ENCODE measurements at regions of chr5 and their contacts with region 1.

Region 1: GRCh38 chr5:37370864-37371726 is at the start of gene NUP155:
- DNase-seq: peak; percentile 74 to 93 (median 86)
- ATAC-seq: peak; percentile 92 to 93
- H3K4me3 Mint-ChIP-seq: peak within 1 kb of the TSS; percentile 95 to 99 (median 98)
- H3K27ac Mint-ChIP-seq: peak within 1 kb of the TSS; percentile 94 to 99 (median 97)
- H3K4me1 Mint-ChIP-seq: peaks cover 21 to 43% (median 40%) of the 10 kb centered on the region in 4 donors
- H3K27me3 Mint-ChIP-seq: no peaks in the 10 kb centered on the region
- polyA plus RNA-seq, gene NUP155: 16.6 to 25.0 (median 24.5) TPM

Region 2: DNA sequence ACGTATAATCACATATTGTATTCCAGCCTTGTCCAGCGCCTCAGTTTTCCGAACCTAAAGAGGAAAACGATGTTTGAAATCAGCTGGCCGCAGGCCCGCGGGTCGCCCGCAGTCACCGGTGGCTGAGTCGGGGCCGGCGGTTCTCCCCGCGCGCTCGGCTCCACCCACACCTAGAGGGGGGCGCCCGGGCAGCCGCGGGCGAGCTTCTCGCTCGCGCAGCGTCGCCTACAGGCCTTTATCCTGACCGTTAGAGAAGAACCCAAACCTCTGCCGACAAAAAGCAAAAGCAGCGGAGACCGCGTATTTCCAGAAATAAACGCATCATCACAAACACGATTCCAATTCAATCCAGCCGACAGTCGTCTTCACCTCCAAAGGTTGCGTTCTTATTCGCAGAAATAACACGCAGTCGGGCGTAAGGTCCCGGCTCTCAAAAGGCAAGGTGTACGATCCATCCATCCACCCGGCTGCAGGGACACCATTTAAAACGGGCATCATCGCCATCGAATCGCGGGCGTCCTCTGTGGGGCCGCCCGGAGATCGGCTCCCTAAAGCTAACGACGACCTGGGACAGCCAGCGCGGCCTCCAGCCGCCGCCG is 495.2 kb before region 1 on chr5:
- POLR2A ChIA-PET with region 1: interaction called, 10 read pairs
- DNase-seq: peak; percentile 66 to 86 (median 74)
- ATAC-seq: peak; percentile 60 to 65
- H3K4me3 Mint-ChIP-seq: peak overlapping the region; percentile 88 to 99 (median 93)
- H3K27ac Mint-ChIP-seq: peak overlapping the region; percentile 95 to 99 (median 98)
- H3K4me1 Mint-ChIP-seq: peaks cover 19 to 68% (median 42%) of the 10 kb centered on the region in 4 donors
- H3K27me3 Mint-ChIP-seq: no peaks in the 10 kb centered on the region

Region 3: DNA sequence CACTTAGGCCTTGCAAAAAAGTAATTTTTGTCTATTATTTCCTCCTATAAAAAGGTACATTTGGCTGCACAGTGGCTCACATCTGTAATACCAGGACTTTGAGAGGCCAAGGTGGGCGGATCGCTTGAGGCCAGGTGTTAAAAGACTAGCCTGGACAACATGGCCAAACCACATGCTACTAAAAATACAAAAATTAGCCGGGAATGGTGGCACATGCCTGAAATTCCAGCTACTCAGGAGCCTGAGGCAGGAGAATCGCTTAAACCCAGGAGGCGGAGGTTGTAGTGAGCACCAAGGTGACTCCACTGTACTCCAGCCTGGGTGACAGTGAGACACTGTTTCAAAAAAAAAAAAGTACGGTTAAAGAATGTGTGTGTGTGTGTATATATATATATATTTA is 15.9 kb before region 1 on chr5:
- POLR2A ChIA-PET with region 1: no interaction called
- DNase-seq: no peak
- ATAC-seq: no peak
- H3K4me3 Mint-ChIP-seq: no peak overlapping the region
- H3K27ac Mint-ChIP-seq: no peak overlapping the region
- H3K4me1 Mint-ChIP-seq: peaks cover 0 to 6% (median 0%) of the 10 kb centered on the region in 4 donors
- H3K27me3 Mint-ChIP-seq: no peaks in the 10 kb centered on the region

Region 4: GRCh38 chr5:37412515-37413277 is 41.6 kb after region 1 on chr5:
- POLR2A ChIA-PET with region 1: no interaction called
- DNase-seq: peak in 7 of 10 donors; percentile 4 to 44 (median 24)
- ATAC-seq: peak; percentile 41 to 48
- H3K4me3 Mint-ChIP-seq: no peak overlapping the region
- H3K27ac Mint-ChIP-seq: peak overlapping the region in 1 of 10 donors; percentile 21
- H3K4me1 Mint-ChIP-seq: peaks cover 0 to 3% (median 0%) of the 10 kb centered on the region in 4 donors
- H3K27me3 Mint-ChIP-seq: no peaks in the 10 kb centered on the region